ENCODE measurements at regions of chr6 and their contacts with region 1.

Region 1: GRCh38 chr6:64838726-64839125 is 868.3 kb downstream of the EYS start:
- DNase-seq: peak; percentile 25
- ATAC-seq: peak; percentile 48; the same call in 1 of the 2 replicates
- H3K4me3 ChIP-seq: no peak overlapping the region
- H3K27ac ChIP-seq: no peak overlapping the region
- H3K4me1 ChIP-seq: no peaks in the 10 kb centered on the region
- H3K27me3 ChIP-seq: no peaks in the 10 kb centered on the region
- CTCF ChIP-seq: no peak; the same call in 1 of the 2 replicates

Region 2: GRCh38 chr6:64477391-64477790 is 361.3 kb before region 1 on chr6:
- CTCF ChIA-PET with region 1: no interaction called
- POLR2A ChIA-PET with region 1: no interaction called
- intact Hi-C with region 1: no loop called
- DNase-seq: no peak
- ATAC-seq: no peak
- H3K4me3 ChIP-seq: no peak overlapping the region
- H3K27ac ChIP-seq: no peak overlapping the region
- H3K4me1 ChIP-seq: no peaks in the 10 kb centered on the region
- H3K27me3 ChIP-seq: no peaks in the 10 kb centered on the region
- CTCF ChIP-seq: no peak

Region 3: DNA sequence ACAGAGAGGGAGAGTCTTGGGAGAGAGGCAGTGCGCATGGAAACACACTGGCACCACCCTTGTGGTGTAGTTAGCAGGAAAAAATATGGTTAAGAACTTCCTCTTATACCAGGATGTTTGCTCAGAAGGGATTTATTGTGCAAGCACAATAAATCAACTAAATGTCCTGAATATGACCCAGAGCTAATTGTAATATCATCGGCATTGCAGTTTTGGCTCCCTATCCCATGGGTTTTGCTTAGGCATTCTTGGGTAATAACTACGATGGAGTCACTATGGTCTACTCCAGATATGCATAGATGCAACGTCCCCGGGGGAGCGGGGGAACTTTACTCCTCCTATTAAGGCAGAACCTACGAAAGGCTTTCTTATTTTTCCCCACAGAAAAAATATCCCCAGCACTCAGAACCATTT is 116.7 kb after region 1 on chr6:
- CTCF ChIA-PET with region 1: no interaction called
- POLR2A ChIA-PET with region 1: no interaction called
- intact Hi-C with region 1: no loop called
- DNase-seq: peak; percentile 18
- ATAC-seq: peak; percentile 27; the same call in 1 of the 2 replicates
- H3K4me3 ChIP-seq: no peak overlapping the region
- H3K27ac ChIP-seq: no peak overlapping the region
- H3K4me1 ChIP-seq: no peaks in the 10 kb centered on the region
- H3K27me3 ChIP-seq: no peaks in the 10 kb centered on the region
- CTCF ChIP-seq: no peak

Region 4: GRCh38 chr6:65075705-65076230 is 237.0 kb after region 1 on chr6:
- CTCF ChIA-PET with region 1: no interaction called
- POLR2A ChIA-PET with region 1: no interaction called
- intact Hi-C with region 1: loop called (anchors 10 kb)
- DNase-seq: no peak
- ATAC-seq: no peak
- H3K4me3 ChIP-seq: no peak overlapping the region
- H3K27ac ChIP-seq: no peak overlapping the region
- H3K4me1 ChIP-seq: no peaks in the 10 kb centered on the region
- H3K27me3 ChIP-seq: no peaks in the 10 kb centered on the region
- CTCF ChIP-seq: no peak

Measured in PC-3 (cell line).